Activated T-helper 2 cell treated with anti-CD3 and anti-CD28 coated beads, Interferon-gamma antibody, Interleukin-2, Interleukin-4, amounts not matched to agents 10 μg/mL and 5 μg/mL and 100 μg/mL, durations not matched to agents 14 hours and 24 hours and 36 hours (primary cell): ENCODE measurements at regions of chr20 and their contacts with region 1.

Region 1: DNA sequence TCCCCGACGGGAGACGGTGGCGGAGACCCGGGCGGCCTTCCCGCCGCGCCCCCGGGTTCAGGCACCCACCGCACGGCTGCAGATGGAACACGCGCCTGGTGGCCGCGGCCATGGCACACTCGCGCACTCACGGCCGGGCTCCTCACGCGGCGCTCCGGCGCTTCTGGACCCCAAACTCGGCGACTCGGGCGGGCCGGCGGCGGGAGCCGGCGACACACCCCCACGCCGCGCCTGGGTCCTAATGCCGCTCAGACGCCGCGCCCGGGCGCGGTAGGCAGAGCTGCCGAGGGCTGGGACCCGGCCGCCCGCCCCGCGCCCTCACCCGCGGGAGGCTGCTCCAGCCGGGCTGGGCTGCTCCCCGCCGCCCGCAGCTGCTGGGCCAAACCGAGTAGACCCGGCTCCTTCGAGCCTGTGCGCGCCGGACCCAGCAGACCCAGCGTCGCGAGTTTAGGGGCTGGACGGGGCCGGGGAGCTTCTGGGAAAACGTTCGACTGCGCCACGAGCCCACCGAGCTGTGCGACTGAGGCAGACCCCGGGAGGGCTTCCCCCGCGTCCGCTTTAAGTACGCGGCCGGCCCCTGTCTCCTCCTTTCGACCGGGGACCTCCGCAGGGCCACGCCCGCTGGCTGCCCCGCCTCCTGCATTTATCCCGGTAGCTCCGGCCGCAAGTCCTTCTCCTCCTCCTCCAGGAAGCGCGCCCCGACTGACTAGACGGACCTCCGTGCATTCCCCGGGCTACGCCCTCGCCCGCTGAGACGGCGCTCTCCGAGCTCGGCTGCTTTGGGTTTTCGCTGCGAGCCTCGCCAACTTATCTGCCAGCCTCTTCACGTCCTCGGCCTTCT is at the start of gene SLC4A11:
- DNase-seq: peak; percentile 34
- H3K4me3 Mint-ChIP-seq: peak within 1 kb of the TSS; percentile 85
- H3K27ac Mint-ChIP-seq: no peak within 1 kb of the TSS
- H3K4me1 Mint-ChIP-seq: peaks cover 8% of the 10 kb centered on the region
- H3K27me3 Mint-ChIP-seq: peaks cover 55% of the 10 kb centered on the region
- total RNA-seq, gene SLC4A11: 1.6 and 2.5 TPM in 2 replicates

Region 2: DNA sequence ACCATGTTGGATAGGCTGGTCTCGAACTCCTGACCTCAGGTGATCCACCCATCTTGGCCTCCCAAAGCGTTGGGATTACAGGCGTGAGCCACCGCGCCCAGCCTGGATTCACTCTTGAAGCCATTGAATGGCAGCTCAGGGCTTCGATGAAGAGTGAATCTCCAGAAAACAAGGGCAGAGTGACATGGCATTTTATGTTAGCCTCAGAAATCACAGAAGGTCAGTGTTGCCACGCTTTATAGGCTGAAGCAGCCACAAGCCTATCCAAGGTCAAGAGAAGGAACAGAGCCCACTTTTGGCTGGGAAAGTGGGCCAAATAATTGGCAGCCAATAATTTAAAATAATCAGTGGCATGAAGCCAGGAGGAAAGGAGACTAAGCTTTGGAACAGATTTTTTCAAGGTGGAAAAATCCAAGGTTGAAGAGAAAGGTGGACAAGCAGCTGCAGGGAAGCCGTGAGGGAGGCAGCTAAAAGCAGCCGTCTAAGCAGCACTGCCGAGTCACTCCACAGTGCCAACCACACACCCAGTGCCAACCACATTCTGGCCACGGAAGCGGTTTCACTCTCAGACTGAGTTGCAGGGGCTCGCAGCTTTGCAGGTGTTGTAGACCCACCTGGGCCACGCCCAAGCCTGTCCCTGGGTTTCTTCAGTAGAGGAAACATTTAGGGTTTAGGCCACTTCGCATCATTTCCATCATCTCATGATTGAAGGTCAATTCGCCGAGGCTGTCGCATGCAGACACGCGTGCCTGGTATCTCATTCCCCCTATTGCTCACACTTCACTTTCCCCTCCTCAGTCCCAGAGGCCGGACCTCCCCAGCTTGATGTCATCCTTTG is 137.3 kb before region 1 on chr20:
- intact Hi-C with region 1: no loop called
- DNase-seq: peak; percentile 26
- H3K4me3 Mint-ChIP-seq: no peak overlapping the region
- H3K27ac Mint-ChIP-seq: no peak overlapping the region
- H3K4me1 Mint-ChIP-seq: peaks cover 15% of the 10 kb centered on the region
- H3K27me3 Mint-ChIP-seq: peaks cover 4% of the 10 kb centered on the region

Region 3: GRCh38 chr20:3470627-3471396 is 231.6 kb after region 1 on chr20 and contains the start of gene ATRN:
- intact Hi-C with region 1: loop called (anchors 2 kb)
- DNase-seq: peak; percentile 83
- H3K4me3 Mint-ChIP-seq: peak within 1 kb of the TSS; percentile 93
- H3K27ac Mint-ChIP-seq: peak within 1 kb of the TSS; percentile 25
- H3K4me1 Mint-ChIP-seq: peaks cover 29% of the 10 kb centered on the region
- H3K27me3 Mint-ChIP-seq: peaks cover 12% of the 10 kb centered on the region
- total RNA-seq, gene ATRN: 11.5 and 12.5 TPM in 2 replicates